ENCODE measurements at regions of chr12 and their contacts with region 1.

Region 1: DNA sequence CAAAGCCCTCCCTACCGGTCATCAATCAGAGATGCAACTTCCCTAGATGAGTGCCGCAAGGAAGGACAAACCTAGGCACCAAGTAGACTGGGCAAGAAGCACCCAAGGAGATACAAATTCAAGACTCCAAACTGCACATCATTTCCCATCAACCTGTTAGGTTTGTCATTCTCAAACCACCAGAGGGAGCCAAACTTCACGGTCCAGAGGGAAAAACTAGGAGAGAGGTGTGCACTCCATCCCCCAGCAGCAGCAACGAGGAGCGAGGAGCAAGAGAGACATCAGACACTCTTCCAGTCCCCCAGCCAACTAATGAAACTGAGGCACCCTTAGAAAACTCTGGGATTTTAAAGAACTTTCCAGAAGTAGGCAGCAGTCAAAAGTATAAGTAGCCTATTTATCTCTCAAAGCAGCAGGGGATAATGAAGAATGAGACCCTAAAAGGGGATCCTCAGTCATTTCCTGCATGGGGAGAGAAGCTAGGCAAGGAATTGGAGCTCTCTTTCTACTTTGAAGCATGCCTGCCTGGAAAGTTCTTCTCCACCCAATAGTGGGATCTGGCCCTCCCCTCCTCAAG is 37.0 kb upstream of the NT5DC3 start:
- DNase-seq: peak; percentile 61
- CTCF ChIP-seq: peak; percentile 78

Region 2: GRCh38 chr12:103705927-103706326 is 172.1 kb before region 1 on chr12:
- in situ Hi-C with region 1: no loop called
- DNase-seq: no peak
- CTCF ChIP-seq: no peak

Region 3: DNA sequence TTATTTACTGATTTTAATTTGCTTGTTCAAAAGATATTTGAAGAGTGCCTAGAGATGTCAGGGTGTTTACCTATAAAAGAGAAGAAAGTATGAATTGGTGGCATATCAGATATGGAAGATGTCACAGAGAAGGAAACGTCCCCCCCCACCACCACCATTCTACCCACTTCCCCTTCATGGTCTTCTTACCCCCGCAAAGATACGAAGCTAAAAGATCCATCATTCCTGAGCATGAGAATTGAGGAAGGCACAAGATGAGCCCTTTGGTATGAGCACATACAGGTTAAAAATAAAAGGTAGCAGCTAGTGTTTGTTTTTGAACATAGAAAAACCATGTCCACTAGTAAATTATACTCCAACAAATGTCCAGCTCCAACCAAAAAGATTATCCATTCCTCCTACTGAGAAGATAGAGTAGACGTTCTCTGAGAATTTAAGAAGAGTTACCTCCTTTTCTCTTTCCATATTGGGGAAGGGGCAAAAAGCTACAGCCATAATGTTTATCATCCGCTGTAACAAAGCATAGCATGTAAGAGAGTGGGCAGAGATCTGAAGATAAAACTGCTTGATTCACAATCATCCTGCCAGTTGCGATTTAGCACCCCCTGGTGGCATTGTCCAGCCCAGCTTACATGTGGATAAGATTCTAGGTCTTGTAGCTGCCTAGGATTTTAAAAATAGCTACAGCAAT is 230.9 kb after region 1 on chr12:
- in situ Hi-C with region 1: loop called (anchors 10 kb)
- DNase-seq: peak; percentile 62
- CTCF ChIP-seq: peak; percentile 90

Measured in GM13977 (cell line).